Kidney (tissue), 22 donors: ENCODE measurements at regions of chr11 and their contacts with region 1.

Region 1: GRCh38 chr11:7690648-7691047 is 15.6 kb downstream of the OVCH2 start:
- DNase-seq: no peak
- H3K4me3 ChIP-seq: no peak overlapping the region
- H3K27ac ChIP-seq: no peak overlapping the region
- H3K4me1 ChIP-seq: peaks cover 0 to 3% (median 0%) of the 10 kb centered on the region in 3 donors
- H3K27me3 ChIP-seq: no peaks in the 10 kb centered on the region
- CTCF ChIP-seq: no peak

Region 2: GRCh38 chr11:7098235-7098832 is 592.3 kb before region 1 on chr11:
- intact Hi-C with region 1: loop called (anchors 10 kb)
- DNase-seq: peak in 2 of 5 donors; percentile 68 to 70
- H3K4me3 ChIP-seq: no peak overlapping the region
- H3K27ac ChIP-seq: no peak overlapping the region
- H3K4me1 ChIP-seq: no peaks in the 10 kb centered on the region
- H3K27me3 ChIP-seq: no peaks in the 10 kb centered on the region
- CTCF ChIP-seq: peak; percentile 52

Region 3: GRCh38 chr11:7630002-7630401 is 60.6 kb before region 1 on chr11:
- intact Hi-C with region 1: no loop called
- DNase-seq: no peak
- H3K4me3 ChIP-seq: no peak overlapping the region
- H3K27ac ChIP-seq: no peak overlapping the region
- H3K4me1 ChIP-seq: no peaks in the 10 kb centered on the region
- H3K27me3 ChIP-seq: no peaks in the 10 kb centered on the region
- CTCF ChIP-seq: no peak